ENCODE measurements at regions of chr5 and their contacts with region 1.

Region 1: GRCh38 chr5:122774861-122775549 is at the start of gene SNX2:
- DNase-seq: peak; percentile 82 to 97 (median 94)

Region 2: DNA sequence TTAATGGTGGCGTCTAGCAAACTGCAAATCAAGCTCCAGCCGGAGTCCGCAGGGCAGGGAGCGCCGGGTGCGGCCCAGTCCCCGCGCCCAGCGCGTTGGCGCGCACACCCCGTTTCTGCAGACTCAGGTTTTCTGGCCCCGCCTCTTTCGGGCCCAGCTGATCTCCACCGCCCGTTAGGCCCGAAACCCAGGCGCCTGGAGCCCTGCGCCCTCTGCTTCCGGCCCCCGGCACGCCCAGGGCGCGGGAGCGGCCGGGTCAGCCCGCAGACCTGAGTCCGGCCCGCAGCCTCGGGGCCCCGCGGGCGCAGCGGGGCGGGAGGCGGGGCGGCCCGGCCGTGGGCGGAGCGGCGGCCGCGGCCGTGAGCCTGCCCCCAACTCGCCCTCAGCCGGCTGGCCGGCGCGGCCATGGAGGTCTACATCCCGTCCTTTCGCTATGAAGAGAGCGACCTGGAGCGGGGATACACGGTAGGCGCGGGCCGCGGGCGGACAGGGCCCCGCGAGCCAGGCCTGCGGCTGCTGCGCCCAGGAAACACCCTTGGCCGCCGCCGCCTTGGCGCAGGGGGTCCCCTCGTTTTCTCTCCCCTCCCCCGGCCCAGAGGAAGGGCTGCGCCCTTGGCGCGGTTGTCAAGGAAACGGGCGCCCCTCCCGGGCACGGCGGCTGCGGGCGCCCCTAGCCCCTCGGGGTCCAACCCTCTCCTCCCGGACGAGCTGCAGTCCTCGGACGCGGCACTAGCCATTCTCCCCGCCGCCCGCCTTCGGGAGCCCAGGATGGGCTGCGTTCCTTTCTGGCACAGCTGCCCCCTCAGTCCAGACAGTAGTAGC is 70.4 kb after region 1 on chr5 and contains the start of gene SNX24:
- intact Hi-C with region 1: loop called (anchors 5 kb)
- DNase-seq: peak; percentile 42 to 89 (median 79)